ENCODE measurements at regions of chr20 and their contacts with region 1.

Region 1: DNA sequence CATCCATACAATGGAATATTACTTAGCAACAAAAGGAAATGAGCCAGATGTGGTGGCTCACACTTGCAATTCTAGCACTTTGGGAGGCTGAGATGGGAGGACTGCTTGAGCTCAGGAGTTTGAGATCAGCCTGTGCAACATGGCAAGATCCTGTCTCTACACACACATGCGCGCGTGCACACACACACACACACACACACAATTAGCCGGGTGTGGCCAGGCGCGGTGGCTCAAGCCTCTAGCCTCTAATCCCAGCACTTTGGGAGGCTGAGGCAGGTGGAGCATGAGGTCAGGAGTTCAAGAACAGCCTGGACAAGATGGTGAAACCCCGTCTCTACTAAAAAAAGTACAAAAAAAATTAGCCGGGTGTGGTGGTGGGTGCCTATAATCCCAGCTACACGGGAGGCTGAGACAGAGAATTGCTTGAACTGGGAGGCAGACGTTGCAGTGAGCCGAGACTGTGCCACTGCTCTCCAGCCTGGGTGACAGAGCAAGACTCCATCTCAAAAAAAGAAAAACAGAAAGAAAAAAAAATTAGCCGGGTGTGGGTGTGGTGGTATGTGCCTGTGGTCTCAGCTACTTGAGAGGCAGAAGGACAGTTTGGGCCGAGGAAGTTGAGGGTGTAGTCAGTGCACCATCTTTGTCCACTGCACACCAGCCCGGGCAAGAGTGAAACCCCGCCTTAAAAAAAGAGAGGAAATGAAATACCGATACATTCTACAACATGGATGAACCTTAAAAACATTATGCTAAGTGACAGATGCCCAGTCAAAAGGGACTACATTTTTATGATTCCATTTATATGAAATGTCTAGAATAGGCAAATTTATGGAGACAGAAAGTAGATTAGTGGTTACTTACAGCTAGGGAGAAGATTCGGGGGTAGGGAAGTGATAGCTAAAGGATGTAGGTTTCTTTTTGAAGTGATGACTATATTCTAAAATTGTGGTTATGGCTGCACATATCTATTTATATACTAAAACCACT is 52.5 kb downstream of the RBL1 start:
- DNase-seq: peak; percentile 65
- ATAC-seq: peak; percentile 77
- H3K4me3 Mint-ChIP-seq: peak overlapping the region; percentile 64
- H3K27ac Mint-ChIP-seq: peak overlapping the region; percentile 94
- H3K4me1 Mint-ChIP-seq: peaks cover 28% of the 10 kb centered on the region
- H3K27me3 Mint-ChIP-seq: no peaks in the 10 kb centered on the region
- CTCF ChIP-seq: no peak

Region 2: GRCh38 chr20:35947489-35947888 is 1095.8 kb before region 1 on chr20:
- CTCF ChIA-PET with region 1: no interaction called
- POLR2A ChIA-PET with region 1: no interaction called
- intact Hi-C with region 1: no loop called
- DNase-seq: peak; percentile 47
- ATAC-seq: peak; percentile 87
- H3K4me3 Mint-ChIP-seq: no peak overlapping the region
- H3K27ac Mint-ChIP-seq: no peak overlapping the region
- H3K4me1 Mint-ChIP-seq: peaks cover 5% of the 10 kb centered on the region
- H3K27me3 Mint-ChIP-seq: no peaks in the 10 kb centered on the region
- CTCF ChIP-seq: peak; percentile 54

Region 3: GRCh38 chr20:36951198-36951976 is 91.9 kb before region 1 on chr20 and contains the start of gene SAMHD1:
- CTCF ChIA-PET with region 1: interaction called, 3 read pairs
- POLR2A ChIA-PET with region 1: no interaction called
- intact Hi-C with region 1: loop called (anchors 10 kb)
- DNase-seq: peak; percentile 93
- ATAC-seq: peak; percentile 93
- H3K4me3 Mint-ChIP-seq: peak within 1 kb of the TSS; percentile 92
- H3K27ac Mint-ChIP-seq: peak within 1 kb of the TSS; percentile 87
- H3K4me1 Mint-ChIP-seq: peaks cover 44% of the 10 kb centered on the region
- H3K27me3 Mint-ChIP-seq: no peaks in the 10 kb centered on the region
- CTCF ChIP-seq: no peak
- total RNA-seq, gene SAMHD1: 30.6 to 35.9 TPM

Region 4: GRCh38 chr20:37108676-37109075 is 65.4 kb after region 1 on chr20:
- CTCF ChIA-PET with region 1: no interaction called
- POLR2A ChIA-PET with region 1: no interaction called
- intact Hi-C with region 1: no loop called
- DNase-seq: no peak
- ATAC-seq: no peak
- H3K4me3 Mint-ChIP-seq: no peak overlapping the region
- H3K27ac Mint-ChIP-seq: no peak overlapping the region
- H3K4me1 Mint-ChIP-seq: no peaks in the 10 kb centered on the region
- H3K27me3 Mint-ChIP-seq: no peaks in the 10 kb centered on the region
- CTCF ChIP-seq: no peak